Naive thymus-derived CD4-positive, alpha-beta T cell (primary cell): ENCODE measurements at regions of chr22 and their contacts with region 1.

Region 1: DNA sequence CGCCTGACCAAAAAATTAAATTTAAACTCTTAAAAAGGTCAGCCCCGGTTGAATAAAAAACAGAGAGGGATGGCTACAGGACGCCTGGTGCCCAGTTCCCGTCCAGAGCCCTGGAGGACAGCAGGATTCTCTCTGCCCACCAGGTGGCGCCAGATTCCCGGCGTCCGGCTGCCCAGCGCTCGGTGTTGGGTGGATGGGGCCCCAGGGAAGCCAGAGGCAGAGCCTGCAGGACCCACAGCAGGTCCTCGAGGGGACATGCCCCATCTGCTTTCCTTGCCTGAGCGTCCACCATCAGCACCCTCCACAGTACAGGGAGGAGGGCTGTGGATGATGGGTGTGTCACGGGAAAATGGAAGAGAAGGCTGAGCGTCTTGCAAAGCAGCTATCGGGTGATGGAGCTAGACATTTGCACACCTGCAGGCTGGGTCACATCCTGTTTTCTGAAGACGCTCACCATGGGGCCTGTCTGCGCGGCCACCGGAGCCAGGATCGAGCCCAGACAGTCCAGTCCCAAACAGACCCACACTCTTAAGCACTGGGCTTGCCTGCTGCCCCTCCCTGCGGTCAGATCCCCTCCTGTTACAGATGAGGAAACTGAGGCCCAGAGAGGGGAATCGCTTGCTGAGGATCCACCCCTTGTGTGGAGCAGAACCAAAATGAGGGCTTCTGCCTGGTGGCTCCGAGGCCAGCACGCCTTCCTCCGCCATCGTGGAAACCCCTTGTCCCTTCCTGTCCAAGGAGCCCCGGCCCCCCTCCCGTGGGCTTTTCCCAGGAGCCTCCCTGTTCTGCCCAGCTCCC is 18.5 kb upstream of the CBX7 start:
- DNase-seq: peak; percentile 64 to 94 (median 85)
- ATAC-seq: peak; percentile 85
- H3K4me3 ChIP-seq: peak overlapping the region; percentile 36
- H3K4me3 Mint-ChIP-seq: peak overlapping the region; percentile 58 to 84 (median 76)
- H3K27ac ChIP-seq: peak overlapping the region; percentile 9
- H3K27ac Mint-ChIP-seq: peak overlapping the region; percentile 82 to 98 (median 93)
- H3K4me1 ChIP-seq: peaks cover 39 to 50% of the 10 kb centered on the region in 2 donors
- H3K4me1 Mint-ChIP-seq: peaks cover 21 to 54% (median 48%) of the 10 kb centered on the region in 7 donors
- H3K27me3 ChIP-seq: no peaks in the 10 kb centered on the region
- H3K27me3 Mint-ChIP-seq: peaks cover 0 to 11% (median 0%) of the 10 kb centered on the region in 5 donors

Region 2: DNA sequence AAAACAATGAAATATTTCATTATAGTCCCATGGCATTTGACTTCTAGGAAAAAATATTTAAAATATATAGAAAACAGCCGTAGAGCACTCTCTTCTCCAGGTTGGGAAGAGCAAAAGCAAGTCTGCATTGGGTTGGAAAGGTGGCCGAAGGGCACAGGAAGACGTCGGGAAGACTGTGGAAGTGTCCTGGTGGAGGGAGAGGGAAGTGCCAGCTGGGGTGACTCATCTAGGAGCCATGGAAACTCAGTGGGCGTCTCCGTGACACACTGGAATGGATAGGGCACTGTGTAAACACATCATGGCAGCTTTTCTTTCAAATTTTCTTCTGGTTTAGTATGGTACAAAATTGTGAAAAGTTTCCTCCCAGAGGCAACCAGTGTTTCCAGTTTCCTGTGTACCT is 452.6 kb before region 1 on chr22:
- CTCF ChIA-PET with region 1: no interaction called
- POLR2A ChIA-PET with region 1: no interaction called
- intact Hi-C with region 1: no loop called
- DNase-seq: no peak
- ATAC-seq: peak; percentile 21
- H3K4me3 ChIP-seq: no peak overlapping the region
- H3K4me3 Mint-ChIP-seq: no peak overlapping the region
- H3K27ac ChIP-seq: no peak overlapping the region
- H3K27ac Mint-ChIP-seq: peak overlapping the region in 4 of 9 donors; percentile 1 to 41 (median 27)
- H3K4me1 ChIP-seq: peaks cover 0 to 5% of the 10 kb centered on the region in 2 donors
- H3K4me1 Mint-ChIP-seq: peaks cover 19 to 40% (median 25%) of the 10 kb centered on the region in 7 donors
- H3K27me3 ChIP-seq: no peaks in the 10 kb centered on the region
- H3K27me3 Mint-ChIP-seq: no peaks in the 10 kb centered on the region

Region 3: DNA sequence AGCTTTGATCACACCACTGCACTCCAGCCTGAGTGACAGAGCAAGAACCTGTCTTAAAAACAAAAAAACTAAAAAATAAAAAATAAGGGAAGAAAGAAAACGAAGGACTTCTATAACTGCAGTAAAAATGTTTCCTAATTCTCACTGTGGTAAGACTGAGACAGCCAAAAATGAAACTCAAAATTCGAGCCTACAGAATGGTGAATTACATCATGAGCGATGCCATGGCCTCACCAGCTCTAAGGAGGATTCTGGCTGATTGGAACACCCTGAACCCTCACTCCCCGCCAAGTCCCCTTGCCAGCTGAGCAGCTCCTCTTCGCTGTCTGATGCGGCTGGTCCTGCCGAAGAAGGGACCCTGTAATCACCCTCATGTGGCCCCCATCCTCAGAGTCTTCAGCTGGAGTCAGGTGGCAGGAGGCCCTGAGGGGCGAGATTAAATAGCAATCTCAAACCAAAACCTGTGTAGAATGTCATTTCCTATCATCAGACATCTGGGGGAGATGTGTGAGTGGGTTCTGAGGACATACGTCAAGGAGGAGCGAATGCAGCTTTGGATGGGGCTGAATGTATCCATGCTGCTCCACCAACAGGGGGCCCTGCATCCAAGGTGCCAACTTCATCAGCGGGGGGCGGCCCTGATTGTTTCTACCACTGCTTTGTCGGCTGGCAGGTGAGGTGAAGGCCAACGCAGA is 44.5 kb after region 1 on chr22:
- CTCF ChIA-PET with region 1: interaction called, 30 read pairs
- POLR2A ChIA-PET with region 1: no interaction called
- intact Hi-C with region 1: loop called in 1 of 2 experiments (anchors 2 kb)
- DNase-seq: peak in 3 of 9 donors; percentile 31 to 49 (median 45)
- ATAC-seq: peak; percentile 81
- H3K4me3 ChIP-seq: no peak overlapping the region
- H3K4me3 Mint-ChIP-seq: no peak overlapping the region
- H3K27ac ChIP-seq: no peak overlapping the region
- H3K27ac Mint-ChIP-seq: no peak overlapping the region
- H3K4me1 ChIP-seq: no peaks in the 10 kb centered on the region
- H3K4me1 Mint-ChIP-seq: peaks cover 0 to 7% (median 0%) of the 10 kb centered on the region in 7 donors
- H3K27me3 ChIP-seq: no peaks in the 10 kb centered on the region
- H3K27me3 Mint-ChIP-seq: peaks cover 9 to 50% (median 32%) of the 10 kb centered on the region in 5 donors

Region 4: DNA sequence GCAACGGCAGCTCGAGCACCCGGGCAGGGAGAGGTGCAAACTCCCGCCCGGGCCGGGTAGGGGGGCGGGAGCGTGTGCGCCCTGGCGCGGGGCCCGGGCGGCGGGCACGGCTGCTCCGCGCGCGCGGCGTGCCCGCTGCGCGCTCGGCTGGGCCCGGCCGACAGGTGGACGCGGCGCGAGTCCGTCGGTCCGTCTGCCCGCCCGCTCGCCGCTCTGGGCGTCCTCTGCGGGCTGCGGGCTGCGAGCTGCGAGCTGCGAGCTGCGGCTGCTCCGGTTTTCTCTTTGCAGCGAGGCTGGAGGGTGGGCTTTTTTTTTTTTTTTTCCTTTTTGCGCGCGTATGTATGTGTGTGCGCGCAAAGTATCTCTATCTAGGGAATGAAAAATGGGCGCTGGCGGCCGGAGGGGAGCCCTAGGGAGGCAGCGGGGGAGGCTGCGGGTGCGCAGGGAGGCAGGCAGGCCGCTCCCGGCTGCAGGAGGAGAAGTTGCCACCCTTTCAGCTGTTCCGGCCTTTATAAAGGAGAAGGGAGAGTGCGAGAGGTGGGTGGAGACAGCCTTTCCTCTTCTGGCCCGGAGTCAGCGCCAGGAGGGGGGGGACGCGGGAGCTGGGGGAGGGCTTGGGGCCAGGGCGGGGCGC is 73.6 kb after region 1 on chr22 and contains the start of gene PDGFB:
- CTCF ChIA-PET with region 1: interaction called, 9 read pairs
- POLR2A ChIA-PET with region 1: interaction called, 93 read pairs
- intact Hi-C with region 1: loop called in 1 of 2 experiments (anchors 1 kb)
- DNase-seq: no peak
- ATAC-seq: no peak
- H3K4me3 ChIP-seq: peak within 1 kb of the TSS; percentile 47
- H3K4me3 Mint-ChIP-seq: peak within 1 kb of the TSS; percentile 74 to 97 (median 86)
- H3K27ac ChIP-seq: peak within 1 kb of the TSS; percentile 49
- H3K27ac Mint-ChIP-seq: peak within 1 kb of the TSS in 5 of 9 donors; percentile 12 to 81 (median 35)
- H3K4me1 ChIP-seq: peaks cover 28 to 32% of the 10 kb centered on the region in 2 donors
- H3K4me1 Mint-ChIP-seq: peaks cover 32 to 40% (median 39%) of the 10 kb centered on the region in 7 donors
- H3K27me3 ChIP-seq: peaks cover 0 to 4% of the 10 kb centered on the region in 2 donors
- H3K27me3 Mint-ChIP-seq: peaks cover 0 to 74% (median 29%) of the 10 kb centered on the region in 5 donors
- total RNA-seq, gene PDGFB: 0.56 to 9.5 (median 2.3) TPM

Region 5: GRCh38 chr22:39275814-39276436 is 104.9 kb after region 1 on chr22:
- CTCF ChIA-PET with region 1: no interaction called
- POLR2A ChIA-PET with region 1: no interaction called
- intact Hi-C with region 1: no loop called
- DNase-seq: no peak
- ATAC-seq: no peak
- H3K4me3 ChIP-seq: no peak overlapping the region
- H3K4me3 Mint-ChIP-seq: no peak overlapping the region
- H3K27ac ChIP-seq: no peak overlapping the region
- H3K27ac Mint-ChIP-seq: peak overlapping the region in 1 of 9 donors; percentile 41
- H3K4me1 ChIP-seq: no peaks in the 10 kb centered on the region
- H3K4me1 Mint-ChIP-seq: no peaks in the 10 kb centered on the region
- H3K27me3 ChIP-seq: no peaks in the 10 kb centered on the region
- H3K27me3 Mint-ChIP-seq: peaks cover 0 to 18% (median 5%) of the 10 kb centered on the region in 5 donors

Region 6: GRCh38 chr22:39306581-39307361 is 135.7 kb after region 1 on chr22:
- CTCF ChIA-PET with region 1: interaction called, 262 read pairs
- POLR2A ChIA-PET with region 1: interaction called, 29 read pairs
- intact Hi-C with region 1: loop called (anchors 1 kb)
- DNase-seq: peak in 5 of 9 donors; percentile 31 to 60 (median 42)
- ATAC-seq: peak; percentile 51
- H3K4me3 ChIP-seq: no peak overlapping the region
- H3K4me3 Mint-ChIP-seq: no peak overlapping the region
- H3K27ac ChIP-seq: no peak overlapping the region
- H3K27ac Mint-ChIP-seq: peak overlapping the region in 3 of 9 donors; percentile 32 to 37 (median 33)
- H3K4me1 ChIP-seq: peaks cover 0 to 5% of the 10 kb centered on the region in 2 donors
- H3K4me1 Mint-ChIP-seq: peaks cover 0 to 13% (median 7%) of the 10 kb centered on the region in 7 donors
- H3K27me3 ChIP-seq: no peaks in the 10 kb centered on the region
- H3K27me3 Mint-ChIP-seq: no peaks in the 10 kb centered on the region